ENCODE measurements at regions of chr5 and their contacts with region 1.

Region 1: GRCh38 chr5:73019766-73020165 is 63.9 kb downstream of the FCHO2 start:
- DNase-seq: no peak
- ATAC-seq: no peak
- H3K4me3 ChIP-seq: no peak overlapping the region
- H3K27ac ChIP-seq: no peak overlapping the region
- H3K4me1 ChIP-seq: peaks cover 0 to 4% of the 10 kb centered on the region in 2 donors
- H3K27me3 ChIP-seq: no peaks in the 10 kb centered on the region

Region 2: GRCh38 chr5:72955768-72956323 is 63.9 kb before region 1 on chr5 and contains the start of gene FCHO2:
- intact Hi-C with region 1: loop called in 1 of 2 experiments (anchors 10 kb)
- DNase-seq: peak; percentile 100
- ATAC-seq: peak; percentile 98
- H3K4me3 ChIP-seq: peak within 1 kb of the TSS; percentile 44 to 69
- H3K27ac ChIP-seq: peak within 1 kb of the TSS; percentile 74 to 81
- H3K4me1 ChIP-seq: peaks cover 0 to 4% of the 10 kb centered on the region in 2 donors
- H3K27me3 ChIP-seq: no peaks in the 10 kb centered on the region
- total RNA-seq, gene FCHO2: 47.7 to 57.5 TPM

Measured in aorta (tissue), 5 donors.